ENCODE measurements at regions of chr2 and their contacts with region 1.

Region 1: DNA sequence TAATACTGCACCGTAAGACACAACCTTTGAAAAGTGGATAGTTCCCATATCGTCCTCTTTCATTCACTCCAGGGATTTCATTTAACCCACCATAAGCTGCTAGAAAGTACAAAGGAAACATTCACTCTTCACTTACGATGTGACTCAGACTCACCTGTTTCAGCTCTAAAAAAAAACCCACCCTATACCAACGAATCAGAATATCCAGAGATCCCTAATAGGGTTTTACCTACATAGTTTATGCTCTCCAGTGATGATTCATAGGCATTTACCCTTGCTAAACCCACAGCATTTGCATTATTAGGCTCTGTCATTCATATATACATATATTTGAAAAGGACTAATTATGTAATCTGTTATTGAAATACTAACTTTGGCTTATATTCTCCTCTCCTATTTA is 60.2 kb downstream of the PRPF40A start:
- DNase-seq: no peak
- H3K4me3 Mint-ChIP-seq: no peak overlapping the region
- H3K27ac Mint-ChIP-seq: peak overlapping the region; percentile 28
- H3K4me1 Mint-ChIP-seq: peaks cover 20% of the 10 kb centered on the region
- H3K27me3 Mint-ChIP-seq: no peaks in the 10 kb centered on the region

Region 2: DNA sequence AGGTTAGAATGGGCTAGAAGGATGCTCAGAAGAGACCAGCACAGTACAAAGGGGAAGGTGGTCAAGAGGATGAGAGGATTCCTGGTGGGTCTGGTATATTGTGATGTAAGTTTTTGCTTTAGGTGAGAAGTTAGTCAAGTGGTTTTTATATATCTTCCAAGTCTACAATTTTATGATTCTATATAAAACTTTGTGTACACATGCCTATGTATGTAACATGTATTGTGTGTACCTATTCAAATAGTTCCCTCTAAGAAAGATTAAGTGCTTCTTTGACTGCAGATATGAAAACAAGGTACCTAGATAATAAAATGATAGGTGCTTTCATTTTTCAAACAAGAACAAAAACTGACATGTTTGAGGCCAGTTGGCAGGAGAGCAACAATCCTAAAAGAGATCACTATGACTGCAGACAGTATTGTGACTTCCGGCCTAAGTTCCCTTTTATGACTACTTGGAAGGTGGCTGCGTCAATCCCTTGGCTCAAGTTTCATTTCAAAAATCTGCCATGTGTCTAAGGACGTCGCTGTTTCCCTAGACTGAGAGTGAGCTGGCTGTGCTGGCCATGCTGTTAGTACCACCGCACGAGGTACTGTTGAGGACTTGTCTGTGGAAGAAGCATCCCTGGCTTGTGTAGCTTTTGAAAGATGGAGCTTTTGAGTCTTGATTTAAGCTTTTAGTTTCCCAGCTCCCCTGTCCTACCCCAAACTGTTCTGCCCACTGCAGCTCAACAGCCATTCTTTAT is 62.8 kb before region 1 on chr2:
- CTCF ChIA-PET with region 1: no interaction called
- intact Hi-C with region 1: no loop called
- DNase-seq: peak; percentile 43
- H3K4me3 Mint-ChIP-seq: no peak overlapping the region
- H3K27ac Mint-ChIP-seq: no peak overlapping the region
- H3K4me1 Mint-ChIP-seq: peaks cover 9% of the 10 kb centered on the region
- H3K27me3 Mint-ChIP-seq: no peaks in the 10 kb centered on the region

Region 3: DNA sequence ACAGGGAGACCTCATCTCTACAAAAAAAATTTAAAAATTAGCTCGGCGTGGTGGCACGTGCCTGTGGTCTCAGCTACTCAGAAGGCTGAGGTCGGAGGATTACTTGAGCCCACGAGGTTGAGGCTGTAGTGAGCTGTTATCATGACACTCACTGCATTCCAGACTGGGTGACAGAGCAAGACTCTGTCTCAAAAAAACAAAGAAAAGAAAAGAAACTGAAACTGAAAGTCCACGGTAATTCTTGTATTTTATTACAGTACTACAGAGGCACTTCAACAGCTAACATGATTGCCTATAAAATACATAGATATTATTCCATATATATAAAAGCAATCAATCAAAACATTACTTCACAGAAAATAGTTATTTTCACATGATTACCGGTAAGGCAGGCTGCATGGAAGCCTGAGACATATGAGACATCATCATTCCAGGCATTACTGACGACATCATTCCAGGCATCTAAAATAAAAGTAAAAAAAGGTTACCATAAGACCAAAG is 37.2 kb after region 1 on chr2:
- CTCF ChIA-PET with region 1: no interaction called
- intact Hi-C with region 1: loop called (anchors 2 kb)
- DNase-seq: peak; percentile 56
- H3K4me3 Mint-ChIP-seq: peak overlapping the region; percentile 70
- H3K27ac Mint-ChIP-seq: peak overlapping the region; percentile 86
- H3K4me1 Mint-ChIP-seq: peaks cover 34% of the 10 kb centered on the region
- H3K27me3 Mint-ChIP-seq: no peaks in the 10 kb centered on the region

Measured in activated naive CD4-positive, alpha-beta T cell treated with anti-CD3 and anti-CD28 coated beads for 36 hours (primary cell).